Activated naive CD4-positive, alpha-beta T cell treated with anti-CD3 and anti-CD28 coated beads for 36 hours (primary cell): ENCODE measurements at regions of chr1 and their contacts with region 1.

Region 1: DNA sequence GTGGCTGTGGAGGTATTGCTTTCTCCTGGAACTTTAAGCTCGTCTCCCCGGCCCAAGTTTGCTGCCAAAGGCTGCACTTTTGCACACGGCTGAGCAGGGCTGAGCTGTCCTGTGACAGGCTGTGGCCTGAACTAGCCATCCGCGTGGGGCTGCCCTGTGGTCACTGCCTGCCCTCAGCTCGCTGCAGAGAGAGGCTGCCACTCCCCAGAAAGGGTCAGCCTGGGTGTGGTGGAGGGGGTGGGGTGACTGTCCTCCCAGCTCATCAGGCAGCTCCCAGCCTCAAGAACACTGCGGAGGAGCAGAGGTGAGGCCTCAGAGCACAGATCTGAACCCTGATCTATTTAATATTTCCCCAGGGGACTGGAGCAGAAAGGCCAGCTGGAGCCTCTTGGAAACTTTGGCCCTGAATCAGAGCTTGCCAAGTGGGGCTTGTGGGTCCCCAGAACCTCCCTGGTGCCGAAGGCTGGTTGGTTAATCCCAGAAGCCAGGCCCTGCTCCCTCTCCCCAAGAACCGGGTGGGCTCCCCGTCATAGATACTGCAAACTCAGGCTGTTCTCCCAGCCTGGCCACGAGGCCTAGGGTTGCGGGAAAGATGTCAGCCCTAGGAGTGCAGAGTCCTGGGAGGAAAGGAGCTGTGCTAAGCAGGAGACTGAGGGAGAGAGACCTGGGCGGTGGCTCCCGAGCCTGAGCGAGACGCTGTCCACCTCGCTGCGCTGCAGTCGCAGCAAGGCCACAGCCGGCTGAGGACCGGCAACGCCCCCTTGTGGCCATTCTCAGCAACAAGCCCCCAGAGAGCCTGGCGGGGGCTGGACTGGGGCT is 125.1 kb upstream of the IPO9 start:
- DNase-seq: peak; percentile 80
- H3K4me3 Mint-ChIP-seq: no peak overlapping the region
- H3K27ac Mint-ChIP-seq: no peak overlapping the region
- H3K4me1 Mint-ChIP-seq: no peaks in the 10 kb centered on the region
- H3K27me3 Mint-ChIP-seq: no peaks in the 10 kb centered on the region

Region 2: DNA sequence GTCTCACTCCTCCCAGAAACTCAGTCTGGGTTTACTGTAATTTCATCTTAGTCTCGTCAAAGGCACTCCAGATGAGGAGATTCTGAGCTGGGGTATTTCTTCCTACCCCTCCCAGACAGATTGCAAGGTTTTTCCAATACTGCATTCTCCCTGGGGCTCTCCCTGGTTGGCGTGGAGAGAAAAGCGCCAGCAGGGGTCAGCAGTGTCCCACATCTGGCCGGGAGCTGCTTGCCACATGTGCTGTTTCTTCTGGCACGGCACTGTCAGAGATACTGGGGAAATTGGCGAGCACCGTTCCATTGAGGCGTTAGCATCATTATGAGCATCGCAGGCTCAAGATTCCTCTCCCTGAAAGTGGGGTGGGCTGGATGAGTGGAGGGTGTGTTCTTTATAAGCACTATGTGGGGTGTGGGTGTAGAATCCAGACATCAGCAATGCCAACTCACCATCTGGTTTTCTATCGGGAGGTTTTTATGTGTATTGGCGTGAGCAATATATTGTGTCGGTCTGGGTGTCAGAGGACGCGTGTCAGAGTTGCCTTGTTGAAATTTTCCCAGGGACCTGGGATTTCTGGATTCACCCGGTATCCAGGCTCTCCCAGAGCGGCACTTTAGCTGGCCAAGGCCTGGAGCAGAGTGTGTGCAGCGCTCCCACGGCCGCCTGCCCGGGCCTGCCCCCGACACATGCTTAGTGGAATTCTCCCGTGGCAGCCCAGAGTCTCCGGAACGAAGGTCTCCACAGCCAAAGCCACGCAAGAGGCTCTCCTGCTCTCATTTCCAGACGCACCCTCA is 172.9 kb before region 1 on chr1:
- CTCF ChIA-PET with region 1: interaction called, 6 read pairs
- intact Hi-C with region 1: loop called (anchors 1 kb)
- DNase-seq: peak; percentile 77
- H3K4me3 Mint-ChIP-seq: no peak overlapping the region
- H3K27ac Mint-ChIP-seq: no peak overlapping the region
- H3K4me1 Mint-ChIP-seq: peaks cover 10% of the 10 kb centered on the region
- H3K27me3 Mint-ChIP-seq: no peaks in the 10 kb centered on the region